ENCODE measurements at regions of chr20 and their contacts with region 1.

Region 1: GRCh38 chr20:13099676-13100075 is 90.9 kb downstream of the SPTLC3 start:
- DNase-seq: no peak
- H3K4me3 ChIP-seq: no peak overlapping the region
- H3K27ac ChIP-seq: no peak overlapping the region
- H3K4me1 ChIP-seq: no peaks in the 10 kb centered on the region
- H3K27me3 ChIP-seq: no peaks in the 10 kb centered on the region
- CTCF ChIP-seq: no peak

Region 2: DNA sequence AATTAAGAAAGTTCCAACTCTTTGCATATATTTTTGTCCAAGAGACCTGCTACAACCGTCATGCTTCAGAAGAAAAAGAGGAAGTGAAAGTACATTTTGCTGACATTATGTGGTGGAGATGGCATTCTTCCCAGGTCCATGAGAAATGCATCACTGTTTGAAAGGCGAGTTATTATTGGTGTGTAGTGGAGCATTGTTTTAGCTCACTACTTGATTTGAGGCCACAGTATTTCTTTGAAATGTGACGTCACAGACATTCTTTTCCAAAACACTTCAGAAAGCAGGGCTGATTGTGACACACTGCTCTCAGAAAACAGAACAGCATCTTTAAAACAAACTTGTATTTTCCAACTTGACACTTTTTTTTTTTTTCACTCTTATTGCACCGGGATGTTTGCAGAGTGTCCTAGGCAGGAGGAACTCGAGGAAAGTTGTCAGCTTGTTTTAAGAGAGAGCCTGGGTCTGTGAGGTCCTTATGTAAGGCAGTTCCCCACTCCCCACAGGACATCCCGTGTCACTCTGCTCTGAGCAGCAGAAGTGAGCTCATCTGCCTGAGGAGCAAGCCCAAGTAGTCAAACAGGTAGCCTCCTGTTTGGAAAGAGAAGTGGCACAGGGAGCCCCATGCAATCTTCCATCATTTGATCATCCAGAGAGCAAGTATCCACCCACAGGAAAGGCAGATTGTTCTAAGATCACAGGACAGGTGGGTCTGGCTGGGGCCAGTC is 89.8 kb before region 1 on chr20:
- intact Hi-C with region 1: loop called (anchors 10 kb)
- DNase-seq: peak; percentile 55
- H3K4me3 ChIP-seq: peak overlapping the region; percentile 39
- H3K27ac ChIP-seq: peak overlapping the region; percentile 81
- H3K4me1 ChIP-seq: peaks cover 6% of the 10 kb centered on the region
- H3K27me3 ChIP-seq: no peaks in the 10 kb centered on the region
- CTCF ChIP-seq: no peak